Pancreas (tissue), 10 donors: ENCODE measurements at regions of chr14 and their contacts with region 1.

Region 1: DNA sequence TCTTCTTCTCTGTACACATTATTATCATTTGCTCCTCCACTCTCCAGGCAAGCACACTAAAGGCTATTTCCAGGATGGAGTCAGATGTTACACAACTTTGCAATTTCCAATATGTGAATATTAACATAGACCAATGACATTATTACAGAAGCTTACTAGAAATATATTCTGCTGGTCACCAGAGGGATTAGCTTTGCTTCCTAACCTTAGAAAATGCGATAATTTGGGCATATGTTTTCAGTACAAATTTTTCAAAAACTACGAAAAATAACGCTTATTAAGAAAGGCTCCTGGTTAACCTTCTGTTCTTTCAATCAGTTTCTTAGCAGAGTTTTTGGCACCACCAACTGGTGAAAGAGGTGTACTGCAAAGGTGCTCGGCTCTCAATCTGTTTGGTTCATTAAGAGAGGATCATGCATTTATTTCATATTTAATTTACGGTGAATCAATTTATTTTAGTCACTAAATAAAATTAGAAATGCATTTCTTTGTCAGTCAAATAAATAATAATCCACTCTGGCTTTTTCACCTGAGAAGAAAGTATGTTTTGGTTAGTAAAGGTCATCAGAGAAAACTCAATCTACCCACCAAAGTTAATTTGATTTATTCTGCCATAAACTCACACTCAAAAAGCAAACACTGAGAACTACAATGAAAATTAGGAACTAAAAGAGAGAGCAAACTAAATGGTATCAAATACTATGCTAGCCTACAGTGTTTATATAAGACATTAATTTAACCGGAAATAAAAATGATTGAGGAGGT is 39.2 kb downstream of the EFCAB11 start:
- DNase-seq: peak in 3 of 6 donors; percentile 24 to 72 (median 25)
- ATAC-seq: peak; percentile 41 to 85 (median 79)
- H3K4me3 ChIP-seq: no peak overlapping the region
- H3K27ac ChIP-seq: no peak overlapping the region
- H3K4me1 ChIP-seq: peaks cover 3 to 11% (median 5%) of the 10 kb centered on the region in 3 donors
- H3K27me3 ChIP-seq: no peaks in the 10 kb centered on the region
- CTCF ChIP-seq: peak; percentile 82 to 88 (median 86)

Region 2: DNA sequence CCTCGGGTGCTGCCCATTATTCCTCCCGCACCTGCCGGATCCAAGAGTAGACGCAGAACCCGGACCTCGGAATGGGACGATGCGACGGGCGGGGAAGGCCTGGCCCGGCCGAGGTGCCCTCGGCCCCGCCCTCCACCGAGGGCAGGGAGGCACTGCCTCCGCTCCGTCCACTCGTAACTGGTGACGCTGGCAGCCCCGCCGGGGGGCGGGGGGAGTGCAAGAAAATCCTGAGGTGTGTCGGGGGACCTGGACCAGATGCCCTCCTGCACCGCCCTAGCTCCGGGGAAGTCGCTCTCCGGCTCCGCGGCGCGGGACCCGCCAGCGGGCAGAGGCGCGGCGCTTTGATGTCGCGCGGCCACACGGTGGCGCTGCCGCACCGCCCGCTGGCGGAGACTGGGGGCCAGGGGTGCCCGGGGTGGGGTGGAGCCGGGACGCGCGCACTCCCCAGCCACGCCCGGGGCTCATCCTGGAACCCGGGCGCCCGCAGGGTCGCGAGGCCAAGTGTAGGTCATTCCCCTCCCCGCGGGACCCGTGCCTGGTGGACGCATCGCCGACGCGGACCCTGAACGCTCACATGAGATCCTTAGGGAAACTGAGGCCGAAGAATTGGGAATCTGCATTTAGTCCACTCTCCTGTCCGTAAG is 888.1 kb before region 1 on chr14:
- intact Hi-C with region 1: loop called in 2 of 3 experiments (anchors 5 kb)
- DNase-seq: peak; percentile 30 to 89 (median 62)
- ATAC-seq: peak; percentile 93 to 96 (median 95)
- H3K4me3 ChIP-seq: peak overlapping the region; percentile 24 to 55 (median 38)
- H3K27ac ChIP-seq: no peak overlapping the region
- H3K4me1 ChIP-seq: peaks cover 6 to 11% (median 9%) of the 10 kb centered on the region in 3 donors
- H3K27me3 ChIP-seq: no peaks in the 10 kb centered on the region
- CTCF ChIP-seq: peak; percentile 78 to 87 (median 84)

Region 3: DNA sequence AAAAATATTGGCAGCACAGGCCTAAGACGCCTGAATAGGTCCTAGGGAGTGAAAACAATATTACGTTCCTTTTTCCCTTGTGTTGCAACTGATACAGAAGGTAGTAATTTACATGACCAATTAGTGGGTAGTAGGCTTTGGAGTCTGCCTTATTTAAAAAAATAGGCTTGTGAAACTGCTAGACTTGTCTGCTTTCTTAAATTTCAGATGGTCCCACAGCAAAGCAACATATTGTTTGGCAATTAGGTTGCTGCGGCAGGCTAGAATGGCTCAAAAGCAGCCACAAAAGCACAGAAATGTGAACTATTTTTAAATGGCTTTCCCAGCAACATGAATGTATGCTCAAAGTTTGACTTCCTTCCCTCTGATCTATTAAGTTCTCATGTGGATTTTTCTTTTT is 878.9 kb before region 1 on chr14:
- intact Hi-C with region 1: loop called in 1 of 3 experiments (anchors 5 kb)
- DNase-seq: no peak
- ATAC-seq: no peak
- H3K4me3 ChIP-seq: no peak overlapping the region
- H3K27ac ChIP-seq: no peak overlapping the region
- H3K4me1 ChIP-seq: peaks cover 0 to 5% (median 4%) of the 10 kb centered on the region in 3 donors
- H3K27me3 ChIP-seq: no peaks in the 10 kb centered on the region
- CTCF ChIP-seq: no peak